A673 (cell line): ENCODE measurements at regions of chr7 and their contacts with region 1.

Region 1: GRCh38 chr7:15720849-15721471 is 34.5 kb upstream of the MEOX2 start:
- DNase-seq: peak; percentile 52
- H3K4me3 ChIP-seq: no peak overlapping the region
- H3K27ac ChIP-seq: no peak overlapping the region
- H3K4me1 ChIP-seq: no peaks in the 10 kb centered on the region
- H3K27me3 ChIP-seq: peaks cover 23% of the 10 kb centered on the region
- CTCF ChIP-seq: peak; percentile 88

Region 2: GRCh38 chr7:15305002-15305600 is 415.9 kb before region 1 on chr7:
- CTCF ChIA-PET with region 1: no interaction called
- POLR2A ChIA-PET with region 1: no interaction called
- intact Hi-C with region 1: loop called (anchors 2 kb)
- DNase-seq: peak; percentile 69
- H3K4me3 ChIP-seq: no peak overlapping the region
- H3K27ac ChIP-seq: no peak overlapping the region
- H3K4me1 ChIP-seq: peaks cover 6% of the 10 kb centered on the region
- H3K27me3 ChIP-seq: no peaks in the 10 kb centered on the region
- CTCF ChIP-seq: peak; percentile 77

Region 3: DNA sequence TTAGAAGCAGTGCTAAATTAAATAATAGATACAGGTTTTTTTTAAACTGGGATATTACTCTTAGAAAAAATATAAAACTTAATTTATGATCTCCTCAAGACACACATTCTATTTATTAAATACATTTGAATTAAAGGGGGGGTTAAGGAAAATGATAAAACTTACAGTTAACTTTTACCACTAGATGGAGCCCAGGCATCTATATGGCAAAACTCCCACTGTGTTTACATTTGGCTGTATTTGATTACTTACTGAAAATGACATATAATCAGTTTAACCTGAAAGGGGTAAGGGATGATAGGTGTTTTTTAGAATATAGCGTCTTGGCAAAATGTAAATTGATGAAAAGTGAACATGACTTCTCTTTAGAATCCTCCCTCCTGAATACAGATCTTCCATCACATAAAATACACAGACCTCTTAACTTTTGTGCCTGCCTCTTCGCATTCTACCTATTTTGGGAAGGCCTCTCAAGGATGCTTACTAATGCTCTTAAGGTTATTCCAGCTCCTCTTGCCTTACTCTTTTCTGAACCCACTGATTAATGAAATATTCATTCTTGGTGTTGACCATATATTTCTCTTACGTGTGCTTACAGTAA is 394.8 kb before region 1 on chr7:
- CTCF ChIA-PET with region 1: no interaction called
- POLR2A ChIA-PET with region 1: no interaction called
- intact Hi-C with region 1: loop called (anchors 2 kb)
- DNase-seq: peak; percentile 51
- H3K4me3 ChIP-seq: no peak overlapping the region
- H3K27ac ChIP-seq: no peak overlapping the region
- H3K4me1 ChIP-seq: no peaks in the 10 kb centered on the region
- H3K27me3 ChIP-seq: no peaks in the 10 kb centered on the region
- CTCF ChIP-seq: peak; percentile 68